ENCODE measurements at regions of chr18 and their contacts with region 1.

Region 1: DNA sequence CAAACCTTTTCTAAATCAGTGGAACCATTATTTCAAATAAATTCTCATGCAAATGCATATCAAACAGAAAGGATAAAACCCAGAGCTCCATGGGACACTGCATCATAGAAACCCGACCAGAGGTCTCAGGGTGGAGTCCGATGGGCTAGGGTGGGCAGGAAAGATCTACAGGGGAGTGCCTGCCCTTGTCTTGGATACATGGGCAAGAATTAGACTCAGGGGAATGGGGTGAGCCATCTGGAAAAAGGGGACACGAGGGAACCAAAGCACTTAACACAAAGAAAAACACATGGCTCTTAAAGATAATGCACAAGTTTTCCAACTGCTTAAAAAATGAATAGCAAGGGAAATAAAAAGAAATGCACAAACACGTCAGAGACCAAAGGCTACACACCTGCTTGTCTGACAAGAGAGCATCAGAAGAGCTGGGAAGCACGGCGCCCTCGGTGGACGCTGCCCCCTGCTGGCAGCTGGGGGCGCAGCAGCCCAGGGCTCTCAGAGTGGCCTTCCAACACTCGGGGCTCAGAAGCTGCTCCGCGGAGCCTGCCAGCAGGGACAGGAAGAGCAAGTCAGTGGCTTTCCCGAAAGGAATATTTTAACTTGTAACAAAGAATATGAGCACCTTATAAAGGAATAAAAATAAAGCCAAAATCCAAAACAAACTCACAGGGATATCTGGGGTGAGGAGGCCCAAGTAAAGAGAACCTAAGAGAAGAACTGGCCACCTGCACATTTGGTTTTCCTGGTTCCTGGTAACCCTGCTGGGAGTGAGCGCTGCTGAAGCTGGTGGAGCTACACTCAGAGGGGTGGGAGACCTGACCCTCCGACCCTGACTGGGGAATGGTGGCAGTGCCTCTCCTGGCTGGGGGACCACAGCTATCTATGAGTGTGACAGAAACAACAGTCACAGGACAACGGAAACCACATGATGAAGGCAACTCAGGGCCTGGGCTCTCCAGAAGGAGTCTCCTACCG is 54.5 kb downstream of the SIGLEC15 start:
- DNase-seq: peak; percentile 65
- ATAC-seq: peak; percentile 98
- H3K4me3 ChIP-seq: no peak overlapping the region
- H3K27ac ChIP-seq: no peak overlapping the region
- H3K4me1 ChIP-seq: no peaks in the 10 kb centered on the region
- H3K27me3 ChIP-seq: no peaks in the 10 kb centered on the region
- CTCF ChIP-seq: peak; percentile 96
- POLR2A ChIP-seq: no peak
- RAD21 ChIP-seq: peak; percentile 93

Region 2: DNA sequence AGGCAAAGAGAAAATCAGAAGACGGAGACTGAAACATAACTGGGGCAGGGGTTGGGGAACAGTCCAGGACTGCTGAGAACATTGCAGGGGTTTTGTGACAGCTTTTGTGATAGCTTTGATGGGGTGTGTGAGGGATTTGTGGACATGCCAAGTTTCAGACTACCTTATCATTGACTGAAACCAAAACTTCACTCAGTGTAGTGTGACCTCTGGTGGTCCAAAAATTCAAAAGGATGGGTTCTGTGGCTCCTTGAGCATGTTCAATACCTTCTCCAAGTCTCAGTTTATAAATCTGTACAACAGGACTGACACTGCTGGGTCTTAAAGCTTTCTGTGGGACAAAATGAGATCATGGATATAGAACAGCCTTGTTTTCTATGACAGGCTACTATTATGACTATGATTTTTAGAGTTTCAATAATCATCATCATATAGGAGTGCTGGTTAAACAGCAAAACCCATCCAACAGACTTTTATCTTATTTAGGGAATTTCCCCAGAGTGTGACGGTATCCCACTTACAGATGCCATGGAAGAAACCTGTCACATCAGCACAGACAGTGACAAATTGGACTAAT is 523.9 kb before region 1 on chr18:
- CTCF ChIA-PET with region 1: no interaction called
- POLR2A ChIA-PET with region 1: no interaction called
- dilution Hi-C with region 1: no loop called
- in situ Hi-C with region 1: no loop called
- intact Hi-C with region 1: no loop called
- DNase-seq: no peak
- ATAC-seq: no peak
- H3K4me3 ChIP-seq: no peak overlapping the region
- H3K27ac ChIP-seq: no peak overlapping the region
- H3K4me1 ChIP-seq: no peaks in the 10 kb centered on the region; the same call in 1 of the 2 replicates
- H3K27me3 ChIP-seq: peaks cover 12% of the 10 kb centered on the region; the same call in 1 of the 2 replicates
- CTCF ChIP-seq: no peak
- POLR2A ChIP-seq: no peak
- RAD21 ChIP-seq: no peak

Region 3: DNA sequence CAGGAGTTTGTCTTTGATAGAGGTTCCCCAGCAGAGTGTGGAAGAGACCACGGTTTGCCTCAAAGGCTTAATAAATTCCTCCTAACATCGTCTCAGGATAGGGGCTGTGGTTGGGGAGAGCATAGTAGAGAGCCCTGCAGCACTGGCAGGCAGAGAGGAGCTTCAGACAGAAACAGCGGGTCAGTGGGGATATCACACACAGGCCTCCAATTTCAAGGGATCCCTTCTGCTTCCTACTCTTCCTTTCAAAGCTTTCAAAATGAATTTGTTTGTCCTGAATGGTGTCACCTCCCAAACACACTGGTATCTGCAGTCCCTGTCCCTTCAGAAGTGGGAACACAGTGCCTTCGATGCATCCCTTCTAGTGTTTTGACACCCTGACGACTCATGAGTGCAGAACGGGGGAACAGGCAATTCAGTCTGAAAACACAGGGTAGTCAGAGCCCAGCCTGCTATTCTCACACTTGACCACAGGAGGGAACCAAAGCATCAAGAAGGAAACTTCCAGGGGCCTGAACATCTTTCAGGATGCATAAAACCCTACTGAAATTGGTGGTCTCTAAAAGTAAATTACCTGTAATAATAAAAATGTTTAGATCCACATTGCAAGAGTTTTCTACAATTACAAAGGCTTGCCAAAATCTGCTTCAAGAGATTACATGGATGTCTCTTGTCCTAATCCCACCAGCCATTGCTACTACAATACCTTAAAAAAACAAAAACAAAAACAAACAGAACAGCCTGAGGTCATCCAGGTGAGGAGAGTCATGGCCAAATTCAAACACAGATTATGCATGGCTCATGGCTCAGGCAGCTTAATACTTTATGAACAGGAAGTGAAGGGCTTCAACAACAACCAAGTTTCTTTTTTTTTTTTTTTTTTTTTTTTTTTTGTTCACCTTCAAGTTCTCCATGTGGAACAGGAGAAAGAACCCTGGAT is 214.9 kb before region 1 on chr18:
- CTCF ChIA-PET with region 1: interaction called, 8 read pairs
- POLR2A ChIA-PET with region 1: no interaction called
- dilution Hi-C with region 1: no loop called
- in situ Hi-C with region 1: no loop called
- intact Hi-C with region 1: loop called (anchors 1 kb)
- DNase-seq: peak; percentile 68
- ATAC-seq: peak; percentile 81
- H3K4me3 ChIP-seq: no peak overlapping the region
- H3K27ac ChIP-seq: no peak overlapping the region
- H3K4me1 ChIP-seq: peaks cover 8% of the 10 kb centered on the region
- H3K27me3 ChIP-seq: no peaks in the 10 kb centered on the region
- CTCF ChIP-seq: peak; percentile 94
- POLR2A ChIP-seq: peak; percentile 39; the same call in 1 of the 2 replicates
- RAD21 ChIP-seq: peak; percentile 96

Region 4: DNA sequence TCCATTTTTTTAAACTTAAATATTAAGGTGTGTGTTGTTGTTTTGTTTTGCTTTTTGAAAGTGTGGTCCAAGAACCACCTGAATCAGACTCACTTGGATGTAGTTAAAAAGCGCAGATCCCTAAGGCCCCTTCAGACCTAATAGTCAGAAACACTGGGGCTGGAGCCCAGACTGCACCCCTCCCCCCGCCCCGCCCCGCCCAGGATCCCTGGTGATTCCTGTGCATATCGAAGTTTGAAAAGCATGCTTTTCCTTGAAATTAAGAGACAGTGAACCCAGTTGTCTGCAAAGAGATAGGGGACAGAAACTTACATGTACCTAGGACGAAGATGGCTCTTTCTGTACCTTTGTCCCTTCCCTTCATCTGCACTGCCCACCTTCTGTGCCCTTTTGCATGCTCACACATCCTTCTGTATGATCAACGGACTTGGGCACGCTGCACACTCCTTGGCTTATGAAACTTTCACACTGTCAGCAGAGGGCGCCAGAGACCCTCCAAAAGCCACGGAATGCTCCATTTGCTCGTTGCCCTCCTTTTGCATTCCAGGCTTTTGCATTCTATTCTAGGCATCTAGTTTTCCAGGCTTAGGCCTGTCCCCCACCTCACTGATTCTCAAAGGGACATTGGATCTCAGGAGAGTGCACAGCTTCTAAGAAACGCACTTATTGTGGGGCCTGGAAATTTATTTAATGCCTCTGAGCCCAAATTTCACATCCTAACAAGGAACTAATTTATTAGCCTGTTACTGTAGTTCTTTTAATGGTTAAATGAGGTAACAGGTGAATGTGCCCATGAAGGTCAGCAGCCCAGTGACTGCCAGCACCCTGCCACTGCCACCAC is 188.8 kb before region 1 on chr18:
- CTCF ChIA-PET with region 1: interaction called, 15 read pairs
- POLR2A ChIA-PET with region 1: no interaction called
- dilution Hi-C with region 1: no loop called
- in situ Hi-C with region 1: loop called (anchors 5 kb)
- intact Hi-C with region 1: loop called (anchors 1 kb)
- DNase-seq: peak; percentile 76
- ATAC-seq: peak; percentile 86
- H3K4me3 ChIP-seq: no peak overlapping the region
- H3K27ac ChIP-seq: no peak overlapping the region
- H3K4me1 ChIP-seq: peaks cover 16% of the 10 kb centered on the region
- H3K27me3 ChIP-seq: no peaks in the 10 kb centered on the region
- CTCF ChIP-seq: peak; percentile 93
- POLR2A ChIP-seq: peak; percentile 67
- RAD21 ChIP-seq: peak; percentile 99

Region 5: GRCh38 chr18:45839414-45840395 is 40.3 kb before region 1 on chr18:
- CTCF ChIA-PET with region 1: interaction called, 4 read pairs
- POLR2A ChIA-PET with region 1: no interaction called
- dilution Hi-C with region 1: no loop called
- in situ Hi-C with region 1: no loop called
- intact Hi-C with region 1: loop called (anchors 2 kb)
- DNase-seq: peak; percentile 80
- ATAC-seq: peak; percentile 81
- H3K4me3 ChIP-seq: no peak overlapping the region
- H3K27ac ChIP-seq: no peak overlapping the region
- H3K4me1 ChIP-seq: peaks cover 10% of the 10 kb centered on the region
- H3K27me3 ChIP-seq: no peaks in the 10 kb centered on the region
- CTCF ChIP-seq: peak; percentile 83
- POLR2A ChIP-seq: no peak
- RAD21 ChIP-seq: peak; percentile 90

Region 6: DNA sequence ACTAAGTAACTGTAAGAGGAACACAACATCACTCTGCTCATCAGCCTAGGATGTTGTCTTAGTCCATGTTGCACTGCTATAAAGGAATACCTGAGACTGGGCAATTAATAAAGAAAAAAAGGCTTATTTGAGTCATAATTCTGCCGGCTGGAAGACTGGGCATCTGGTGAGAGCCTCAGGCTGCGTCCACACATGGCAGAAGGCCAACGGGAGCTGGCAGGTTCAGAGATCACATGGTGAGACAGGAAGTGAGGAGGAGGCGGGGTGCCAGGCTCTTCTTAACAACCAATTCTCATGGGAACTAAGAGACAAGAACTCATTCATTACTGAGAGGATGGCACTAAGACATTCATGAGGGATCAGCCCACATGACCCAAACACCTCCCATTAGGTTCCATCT is 40.4 kb after region 1 on chr18:
- CTCF ChIA-PET with region 1: no interaction called
- POLR2A ChIA-PET with region 1: no interaction called
- dilution Hi-C with region 1: no loop called
- in situ Hi-C with region 1: no loop called
- intact Hi-C with region 1: loop called (anchors 2 kb)
- DNase-seq: peak; percentile 62
- ATAC-seq: no peak
- H3K4me3 ChIP-seq: no peak overlapping the region
- H3K27ac ChIP-seq: no peak overlapping the region
- H3K4me1 ChIP-seq: peaks cover 2% of the 10 kb centered on the region; the same call in 1 of the 2 replicates
- H3K27me3 ChIP-seq: no peaks in the 10 kb centered on the region
- CTCF ChIP-seq: no peak
- POLR2A ChIP-seq: no peak
- RAD21 ChIP-seq: no peak

Region 7: GRCh38 chr18:45984546-45985235 is 104.7 kb after region 1 on chr18:
- CTCF ChIA-PET with region 1: no interaction called
- POLR2A ChIA-PET with region 1: interaction called, 14 read pairs
- dilution Hi-C with region 1: no loop called
- in situ Hi-C with region 1: no loop called
- intact Hi-C with region 1: no loop called
- DNase-seq: no peak
- ATAC-seq: no peak
- H3K4me3 ChIP-seq: no peak overlapping the region
- H3K27ac ChIP-seq: no peak overlapping the region
- H3K4me1 ChIP-seq: 0 out of 2 replicates have a peak, but pooled peaks cover 2% of the 10 kb centered on the region
- H3K27me3 ChIP-seq: no peaks in the 10 kb centered on the region
- CTCF ChIP-seq: no peak
- POLR2A ChIP-seq: no peak
- RAD21 ChIP-seq: no peak

Measured in IMR-90 (cell line).